Activated CD8-positive, alpha-beta T cell treated with anti-CD3 and anti-CD28 coated beads, Interleukin-2, amount 10 ng/mL, durations not matched to agents 7 days and 5 days (primary cell): ENCODE measurements at regions of chr3 and their contacts with region 1.

Region 1: DNA sequence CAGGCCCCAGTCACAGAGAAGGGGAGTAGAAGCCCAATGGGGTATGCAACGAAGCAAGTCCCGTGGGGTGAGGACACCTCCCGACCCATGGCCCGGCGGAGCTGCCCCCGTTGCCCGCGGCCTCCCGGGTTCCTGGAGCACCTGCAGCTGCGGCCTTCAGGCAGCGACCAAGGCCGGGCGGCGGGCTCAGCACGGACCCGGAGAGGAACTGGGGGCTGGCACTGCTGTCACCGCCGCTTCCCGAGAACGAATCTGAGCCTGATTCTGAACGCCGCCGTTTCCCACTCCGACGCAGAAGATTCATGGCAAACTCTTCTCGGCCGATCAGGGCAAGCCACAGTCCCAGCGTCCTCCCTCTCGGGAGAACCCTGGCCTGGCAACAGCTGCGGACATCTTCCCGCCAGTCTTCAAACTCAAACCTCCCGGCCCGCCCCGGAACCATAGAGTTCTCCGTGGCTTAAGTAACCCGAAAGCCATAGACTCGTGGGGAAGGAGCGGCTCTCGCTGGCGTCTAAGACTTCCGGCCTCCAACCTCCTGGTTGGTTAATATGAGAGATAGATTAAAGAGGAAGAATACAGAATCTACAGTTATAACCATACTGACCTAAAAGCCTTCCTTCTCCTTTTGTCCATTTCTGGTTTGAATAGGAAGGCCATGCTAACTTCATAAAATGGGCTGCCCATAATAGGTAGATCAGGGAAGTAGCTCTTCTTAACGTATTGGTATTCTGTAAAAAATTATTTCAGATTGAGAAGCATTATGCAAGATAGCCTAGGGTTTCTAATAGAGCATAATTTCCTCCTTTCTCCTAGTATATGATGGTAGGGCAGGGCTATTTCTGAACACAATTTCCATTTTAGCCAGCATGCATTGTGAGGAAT is at the start of gene POLQ:
- DNase-seq: peak; percentile 94
- ATAC-seq: peak; percentile 95
- H3K4me3 Mint-ChIP-seq: peak within 1 kb of the TSS; percentile 85
- H3K27ac Mint-ChIP-seq: peak within 1 kb of the TSS; percentile 90
- H3K4me1 Mint-ChIP-seq: peaks cover 27% of the 10 kb centered on the region
- H3K27me3 Mint-ChIP-seq: no peaks in the 10 kb centered on the region
- total RNA-seq, gene POLQ: 35.5 to 35.6 TPM

Region 2: GRCh38 chr3:121566773-121567172 is 21.0 kb after region 1 on chr3:
- CTCF ChIA-PET with region 1: no interaction called
- POLR2A ChIA-PET with region 1: no interaction called
- DNase-seq: no peak
- ATAC-seq: no peak
- H3K4me3 Mint-ChIP-seq: no peak overlapping the region
- H3K27ac Mint-ChIP-seq: no peak overlapping the region
- H3K4me1 Mint-ChIP-seq: no peaks in the 10 kb centered on the region
- H3K27me3 Mint-ChIP-seq: peaks cover 3% of the 10 kb centered on the region

Region 3: GRCh38 chr3:121660356-121661171 is 114.7 kb after region 1 on chr3 and contains the start of gene HCLS1:
- CTCF ChIA-PET with region 1: no interaction called
- POLR2A ChIA-PET with region 1: interaction called, 10 read pairs
- DNase-seq: peak; percentile 85
- ATAC-seq: peak; percentile 86
- H3K4me3 Mint-ChIP-seq: peak within 1 kb of the TSS; percentile 93
- H3K27ac Mint-ChIP-seq: peak within 1 kb of the TSS; percentile 100
- H3K4me1 Mint-ChIP-seq: peaks cover 56% of the 10 kb centered on the region
- H3K27me3 Mint-ChIP-seq: no peaks in the 10 kb centered on the region
- total RNA-seq, gene HCLS1: 280 to 288 TPM

Region 4: DNA sequence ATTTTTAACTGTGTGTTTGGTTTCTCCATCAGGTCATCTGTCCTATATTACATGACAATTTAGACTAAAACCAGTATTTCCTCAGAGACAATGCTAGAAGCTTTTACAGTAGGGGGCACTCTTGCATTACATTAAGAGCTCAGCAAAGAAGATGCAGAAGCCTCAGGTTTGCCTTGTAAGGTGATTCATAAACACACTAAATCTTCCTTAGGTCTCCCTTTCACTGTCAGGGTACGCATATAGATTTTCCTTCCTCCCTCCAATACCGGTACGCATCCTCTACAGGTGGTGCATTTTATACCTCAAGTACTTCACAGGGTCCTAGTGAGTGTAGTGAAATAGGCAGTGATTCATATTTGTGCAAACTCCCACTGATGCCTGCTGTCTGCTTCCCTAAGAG is 555.8 kb after region 1 on chr3:
- CTCF ChIA-PET with region 1: interaction called, 32 read pairs
- POLR2A ChIA-PET with region 1: interaction called, 3 read pairs
- DNase-seq: peak; percentile 50
- ATAC-seq: peak; percentile 76
- H3K4me3 Mint-ChIP-seq: no peak overlapping the region
- H3K27ac Mint-ChIP-seq: no peak overlapping the region
- H3K4me1 Mint-ChIP-seq: peaks cover 22% of the 10 kb centered on the region
- H3K27me3 Mint-ChIP-seq: no peaks in the 10 kb centered on the region

Region 5: GRCh38 chr3:122383771-122384697 is 838.2 kb after region 1 on chr3 and contains the start of gene FAM162A:
- CTCF ChIA-PET with region 1: interaction called, 11 read pairs
- POLR2A ChIA-PET with region 1: interaction called, 9 read pairs
- DNase-seq: peak; percentile 96
- ATAC-seq: peak; percentile 98
- H3K4me3 Mint-ChIP-seq: peak within 1 kb of the TSS; percentile 90
- H3K27ac Mint-ChIP-seq: peak within 1 kb of the TSS; percentile 91
- H3K4me1 Mint-ChIP-seq: peaks cover 58% of the 10 kb centered on the region
- H3K27me3 Mint-ChIP-seq: no peaks in the 10 kb centered on the region
- total RNA-seq, gene FAM162A: 78.0 to 78.4 TPM

Region 6: DNA sequence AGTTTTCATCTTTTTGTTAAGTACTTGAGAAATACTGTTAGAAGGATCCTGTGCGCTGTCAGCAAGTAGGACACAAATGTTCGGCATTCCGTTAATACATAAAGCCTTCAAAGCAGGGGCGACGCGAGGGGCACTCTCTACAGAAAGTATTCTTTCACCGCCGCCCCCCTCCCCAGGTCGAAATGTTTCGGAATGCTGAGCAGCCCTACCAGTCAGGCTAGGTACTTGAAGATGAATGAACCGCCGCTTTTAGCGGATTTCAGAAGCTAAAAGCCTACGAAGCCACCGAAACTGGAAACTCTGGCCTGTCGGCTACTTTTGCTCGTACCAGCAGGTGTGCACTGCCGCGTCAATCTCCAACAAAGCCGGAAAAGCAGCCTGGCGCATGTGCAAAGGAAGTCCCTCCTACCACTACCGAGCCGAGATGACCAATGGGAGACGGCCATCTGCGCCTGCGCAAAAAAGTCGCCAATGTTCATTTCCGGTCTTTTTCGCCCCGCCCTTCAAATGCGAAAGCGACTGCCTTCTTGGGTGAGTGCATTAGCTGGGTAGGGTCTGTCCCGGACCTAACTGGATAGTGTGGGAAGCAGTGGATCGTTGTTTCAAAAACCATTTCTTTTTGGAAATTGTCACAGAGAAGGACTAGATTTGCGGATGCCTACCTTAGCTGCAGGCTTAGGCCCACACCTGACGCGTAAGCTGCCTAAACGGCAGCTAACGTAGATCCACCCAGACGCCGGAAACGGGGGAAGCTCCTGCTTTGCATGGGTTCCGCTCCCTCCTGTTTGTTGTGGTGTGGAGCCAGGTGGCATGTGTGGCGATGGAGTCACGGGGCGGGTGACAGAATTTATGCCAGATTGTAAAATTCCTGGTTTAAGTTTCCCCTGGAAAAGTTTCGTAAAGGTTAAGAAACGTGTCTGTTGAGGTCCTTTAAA is 870.2 kb after region 1 on chr3 and contains the start of gene WDR5B:
- CTCF ChIA-PET with region 1: interaction called, 4 read pairs
- POLR2A ChIA-PET with region 1: interaction called, 10 read pairs
- DNase-seq: peak; percentile 99
- ATAC-seq: peak; percentile 94
- H3K4me3 Mint-ChIP-seq: peak within 1 kb of the TSS; percentile 96
- H3K27ac Mint-ChIP-seq: peak within 1 kb of the TSS; percentile 99
- H3K4me1 Mint-ChIP-seq: peaks cover 51% of the 10 kb centered on the region
- H3K27me3 Mint-ChIP-seq: no peaks in the 10 kb centered on the region
- total RNA-seq, gene WDR5B: 4.5 to 5.1 TPM